Cardiac septum (tissue), 1 donor: ENCODE measurements at regions of chr4 and their contacts with region 1.

Region 1: DNA sequence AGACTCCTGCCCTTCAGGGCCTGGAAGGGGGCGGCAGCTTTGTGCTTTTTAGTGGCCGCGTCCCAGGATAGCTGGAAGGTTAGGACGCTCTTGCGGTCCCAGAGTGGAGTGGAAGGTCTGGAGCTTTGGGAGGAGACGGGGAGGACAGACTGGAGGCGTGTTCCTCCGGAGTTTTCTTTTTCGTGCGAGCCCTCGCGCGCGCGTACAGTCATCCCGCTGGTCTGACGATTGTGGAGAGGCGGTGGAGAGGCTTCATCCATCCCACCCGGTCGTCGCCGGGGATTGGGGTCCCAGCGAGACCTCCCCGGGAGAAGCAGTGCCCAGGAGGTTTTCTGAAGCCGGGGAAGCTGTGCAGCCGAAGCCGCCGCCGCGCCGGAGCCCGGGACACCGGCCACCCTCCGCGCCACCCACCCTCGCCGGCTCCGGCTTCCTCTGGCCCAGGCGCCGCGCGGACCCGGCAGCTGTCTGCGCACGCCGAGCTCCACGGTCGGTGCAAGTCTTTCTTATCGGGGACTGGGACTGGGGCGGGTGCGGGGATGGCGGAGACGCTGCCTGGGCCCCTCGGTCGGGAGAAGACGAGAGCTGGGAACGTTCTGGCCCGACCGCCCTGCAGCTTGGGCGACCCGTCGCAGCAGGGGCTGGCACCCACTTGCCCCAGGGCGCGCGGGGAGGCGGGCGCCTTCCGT is at the start of gene EDNRA:
- DNase-seq: no peak
- total RNA-seq, gene EDNRA: 15.4 TPM

Region 2: GRCh38 chr4:147334478-147334877 is 146.6 kb before region 1 on chr4:
- intact Hi-C with region 1: loop called (anchors 10 kb)
- DNase-seq: no peak

Region 3: GRCh38 chr4:147361726-147362125 is 119.3 kb before region 1 on chr4:
- intact Hi-C with region 1: loop called (anchors 10 kb)
- DNase-seq: no peak

Region 4: DNA sequence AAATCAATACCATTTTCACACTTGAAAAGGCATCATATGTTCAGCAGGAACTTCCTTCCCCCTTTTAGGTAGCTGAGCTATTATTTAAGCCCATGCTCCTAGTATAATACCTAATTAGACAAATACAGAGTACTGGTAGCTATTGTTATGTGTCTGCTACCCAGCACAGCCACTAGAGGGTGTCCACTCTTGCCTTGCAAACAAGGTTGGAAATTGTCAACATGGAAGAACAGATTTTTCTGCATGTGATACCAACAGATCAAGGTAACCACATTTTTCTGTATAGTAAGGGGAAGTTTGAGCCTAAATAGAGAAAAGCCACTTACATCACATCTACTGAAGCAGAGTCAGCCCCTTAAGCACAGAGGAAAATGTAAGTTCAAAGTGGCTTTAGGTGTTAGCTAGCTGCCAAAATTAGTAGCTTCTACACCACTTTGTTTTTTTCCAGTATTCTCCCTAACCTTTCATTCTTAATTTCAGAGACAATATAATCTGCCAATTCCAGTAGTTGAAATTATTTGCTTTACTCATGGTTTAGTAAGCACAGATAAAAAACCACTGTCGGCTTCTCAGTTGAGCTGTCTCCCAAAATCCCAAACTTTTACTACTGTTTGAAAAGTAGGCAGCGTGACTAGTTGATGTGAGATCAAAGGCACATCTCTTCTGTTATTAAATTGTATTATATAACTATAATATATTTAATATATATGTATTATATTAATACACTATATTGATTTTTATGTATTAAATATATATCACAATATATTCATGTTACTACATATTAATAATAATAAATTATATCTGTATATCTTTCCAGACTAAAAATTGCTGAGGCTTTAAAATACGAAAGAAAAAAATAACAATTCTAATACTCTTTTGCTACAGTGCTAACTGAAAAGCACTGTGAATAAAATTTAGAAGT is 38.1 kb after region 1 on chr4:
- intact Hi-C with region 1: loop called (anchors 5 kb)
- DNase-seq: no peak